Ascending aorta (tissue), 2 donors: ENCODE measurements at regions of chr19 and their contacts with region 1.

Region 1: DNA sequence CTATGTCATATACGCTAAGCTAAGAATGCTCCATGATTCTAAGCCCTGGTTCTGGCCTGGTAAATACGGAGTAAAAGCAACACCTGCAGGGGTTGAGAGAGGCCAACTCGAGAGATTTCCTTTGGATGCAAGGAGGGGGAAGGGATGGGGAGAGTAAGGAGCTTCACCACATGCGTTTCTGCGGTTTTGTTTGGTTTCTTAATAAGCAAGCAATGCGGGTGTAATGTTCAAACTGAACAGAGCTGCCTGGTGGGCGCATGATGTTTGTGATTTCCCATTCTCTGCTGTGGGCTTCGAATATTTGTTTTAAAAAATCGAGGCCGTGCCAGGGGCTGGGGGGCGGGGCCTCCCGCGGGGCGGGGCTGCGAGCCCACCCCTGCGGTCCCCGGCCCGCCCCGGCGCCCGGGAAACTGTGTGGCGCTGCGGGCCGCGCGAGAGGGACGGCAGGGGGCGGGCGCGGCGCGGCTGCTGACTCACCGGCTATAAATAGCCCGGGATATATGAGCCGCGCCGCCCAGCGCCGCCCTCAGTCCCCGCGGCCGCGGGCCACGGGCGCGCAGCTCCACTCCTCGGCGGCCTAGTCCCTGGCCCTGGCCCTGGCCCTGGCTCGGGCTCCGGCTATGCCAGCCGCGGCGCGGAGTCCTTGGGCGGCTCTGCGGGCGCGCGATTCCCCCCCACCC is 5.1 kb downstream of the BBC3 start:
- DNase-seq: peak in 1 of 2 donors; percentile 92
- H3K4me3 ChIP-seq: peak overlapping the region; percentile 88 to 91
- H3K27ac ChIP-seq: peak overlapping the region; percentile 100
- H3K4me1 ChIP-seq: peaks cover 12 to 24% of the 10 kb centered on the region in 2 donors
- H3K27me3 ChIP-seq: no peaks in the 10 kb centered on the region
- CTCF ChIP-seq: peak in 2 of 3 experiments; percentile 19 to 77

Region 2: GRCh38 chr19:46614114-46614722 is 611.7 kb before region 1 on chr19:
- intact Hi-C with region 1: no loop called
- DNase-seq: peak in 1 of 2 donors; percentile 91
- H3K4me3 ChIP-seq: no peak overlapping the region
- H3K27ac ChIP-seq: peak overlapping the region; percentile 1 to 23
- H3K4me1 ChIP-seq: peaks cover 9 to 21% of the 10 kb centered on the region in 2 donors
- H3K27me3 ChIP-seq: no peaks in the 10 kb centered on the region
- CTCF ChIP-seq: peak; percentile 91 to 95 (median 94)

Region 3: GRCh38 chr19:47081111-47081510 is 144.8 kb before region 1 on chr19:
- intact Hi-C with region 1: no loop called
- DNase-seq: no peak
- H3K4me3 ChIP-seq: no peak overlapping the region
- H3K27ac ChIP-seq: peak overlapping the region; percentile 15 to 79
- H3K4me1 ChIP-seq: peaks cover 3% of the 10 kb centered on the region in 2 donors
- H3K27me3 ChIP-seq: no peaks in the 10 kb centered on the region
- CTCF ChIP-seq: no peak

Region 4: DNA sequence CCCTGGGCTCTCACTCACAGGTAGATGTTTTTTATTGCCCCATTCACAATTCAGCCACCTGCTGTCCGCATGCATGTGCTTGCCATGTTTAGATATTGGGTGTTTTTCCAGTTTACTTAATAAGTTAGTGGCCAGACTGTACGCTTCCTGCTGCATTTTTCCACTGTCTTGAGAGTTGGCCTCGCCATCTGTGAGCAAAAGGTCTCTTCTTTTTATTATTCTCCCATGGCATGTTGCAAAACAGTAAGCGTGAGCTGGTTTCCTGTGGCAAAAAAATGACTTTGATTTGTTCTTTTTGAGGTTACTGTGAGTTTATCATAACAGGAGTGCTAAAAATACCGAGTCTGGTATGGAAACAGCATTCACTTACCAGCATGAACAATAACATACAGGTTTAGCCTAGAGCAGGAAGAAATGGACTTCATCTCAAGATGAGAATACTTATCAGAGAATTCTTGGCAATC is 49.2 kb before region 1 on chr19:
- intact Hi-C with region 1: loop called (anchors 1 kb)
- DNase-seq: peak in 1 of 2 donors; percentile 77
- H3K4me3 ChIP-seq: no peak overlapping the region
- H3K27ac ChIP-seq: peak overlapping the region; percentile 80 to 82
- H3K4me1 ChIP-seq: peaks cover 10 to 26% of the 10 kb centered on the region in 2 donors
- H3K27me3 ChIP-seq: no peaks in the 10 kb centered on the region
- CTCF ChIP-seq: no peak

Region 5: GRCh38 chr19:47210689-47211316 is 15.1 kb before region 1 on chr19:
- intact Hi-C with region 1: loop called (anchors 2 kb)
- DNase-seq: peak in 1 of 2 donors; percentile 93
- H3K4me3 ChIP-seq: no peak overlapping the region
- H3K27ac ChIP-seq: peak overlapping the region; percentile 48 to 69
- H3K4me1 ChIP-seq: no peaks in the 10 kb centered on the region
- H3K27me3 ChIP-seq: no peaks in the 10 kb centered on the region
- CTCF ChIP-seq: peak; percentile 81 to 93 (median 83)